ENCODE measurements at regions of chr3 and their contacts with region 1.

Region 1: GRCh38 chr3:124559881-124560574 is 170.2 kb upstream of the UMPS start:
- DNase-seq: no peak
- H3K4me3 ChIP-seq: no peak overlapping the region
- H3K27ac ChIP-seq: peak overlapping the region; percentile 70 to 82 (median 78)
- H3K4me1 ChIP-seq: peaks cover 27 to 61% (median 61%) of the 10 kb centered on the region in 4 donors
- H3K27me3 ChIP-seq: no peaks in the 10 kb centered on the region
- CTCF ChIP-seq: peak; percentile 80 to 87 (median 86)
- EP300 ChIP-seq: no peak
- POLR2A ChIP-seq: no peak

Region 2: GRCh38 chr3:124333931-124334640 is 225.9 kb before region 1 on chr3:
- intact Hi-C with region 1: no loop called
- DNase-seq: peak; percentile 57
- H3K4me3 ChIP-seq: no peak overlapping the region
- H3K27ac ChIP-seq: no peak overlapping the region
- H3K4me1 ChIP-seq: no peaks in the 10 kb centered on the region
- H3K27me3 ChIP-seq: no peaks in the 10 kb centered on the region
- CTCF ChIP-seq: no peak
- EP300 ChIP-seq: no peak
- POLR2A ChIP-seq: no peak

Region 3: DNA sequence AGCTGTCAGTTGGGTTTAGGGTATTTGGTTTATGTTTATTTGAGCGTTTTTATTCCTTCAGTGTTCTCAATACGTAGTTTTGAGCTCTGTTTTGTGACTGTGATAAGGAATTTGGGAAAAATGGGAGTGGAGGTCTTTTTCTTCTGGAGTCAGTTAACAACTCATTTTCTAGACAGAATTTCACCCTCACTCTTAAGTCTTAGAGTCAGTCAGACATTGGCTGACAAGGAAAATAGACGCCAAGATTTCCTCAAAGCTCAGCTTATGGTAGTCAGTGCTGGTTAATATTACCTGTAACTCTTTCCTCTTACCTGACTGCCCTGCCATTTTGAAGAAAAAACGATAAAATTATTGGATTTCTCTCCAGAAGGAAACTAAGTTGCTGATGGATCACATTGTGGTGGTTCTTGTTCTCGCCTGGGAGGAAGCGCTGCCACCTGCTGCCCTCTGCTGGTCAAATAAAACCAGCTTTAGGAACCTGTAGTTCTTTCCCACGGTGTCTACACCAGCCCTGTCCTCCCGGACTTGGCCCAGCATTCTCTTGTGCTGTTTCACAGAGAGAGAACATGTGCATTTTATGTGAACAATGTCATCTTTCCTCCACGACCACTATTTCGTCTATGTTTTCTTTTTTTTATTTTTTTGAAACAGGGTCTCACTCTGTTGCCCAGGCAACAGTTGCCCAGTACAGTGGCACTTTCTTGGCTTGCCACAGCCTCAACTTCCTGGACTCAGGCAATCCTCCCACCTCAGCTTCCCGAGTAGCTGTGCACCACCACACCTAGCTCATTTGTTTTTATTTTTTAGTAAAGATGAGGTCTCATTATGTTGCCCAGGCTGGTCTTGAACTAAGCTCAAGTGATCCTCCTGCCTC is 128.8 kb after region 1 on chr3:
- intact Hi-C with region 1: loop called (anchors 1 kb)
- DNase-seq: no peak
- H3K4me3 ChIP-seq: no peak overlapping the region
- H3K27ac ChIP-seq: no peak overlapping the region
- H3K4me1 ChIP-seq: peaks cover 0 to 7% (median 2%) of the 10 kb centered on the region in 4 donors
- H3K27me3 ChIP-seq: no peaks in the 10 kb centered on the region
- CTCF ChIP-seq: peak; percentile 79 to 88 (median 84)
- EP300 ChIP-seq: no peak
- POLR2A ChIP-seq: no peak